A549 (cell line): ENCODE measurements at regions of chr11 and their contacts with region 1.

Region 1: DNA sequence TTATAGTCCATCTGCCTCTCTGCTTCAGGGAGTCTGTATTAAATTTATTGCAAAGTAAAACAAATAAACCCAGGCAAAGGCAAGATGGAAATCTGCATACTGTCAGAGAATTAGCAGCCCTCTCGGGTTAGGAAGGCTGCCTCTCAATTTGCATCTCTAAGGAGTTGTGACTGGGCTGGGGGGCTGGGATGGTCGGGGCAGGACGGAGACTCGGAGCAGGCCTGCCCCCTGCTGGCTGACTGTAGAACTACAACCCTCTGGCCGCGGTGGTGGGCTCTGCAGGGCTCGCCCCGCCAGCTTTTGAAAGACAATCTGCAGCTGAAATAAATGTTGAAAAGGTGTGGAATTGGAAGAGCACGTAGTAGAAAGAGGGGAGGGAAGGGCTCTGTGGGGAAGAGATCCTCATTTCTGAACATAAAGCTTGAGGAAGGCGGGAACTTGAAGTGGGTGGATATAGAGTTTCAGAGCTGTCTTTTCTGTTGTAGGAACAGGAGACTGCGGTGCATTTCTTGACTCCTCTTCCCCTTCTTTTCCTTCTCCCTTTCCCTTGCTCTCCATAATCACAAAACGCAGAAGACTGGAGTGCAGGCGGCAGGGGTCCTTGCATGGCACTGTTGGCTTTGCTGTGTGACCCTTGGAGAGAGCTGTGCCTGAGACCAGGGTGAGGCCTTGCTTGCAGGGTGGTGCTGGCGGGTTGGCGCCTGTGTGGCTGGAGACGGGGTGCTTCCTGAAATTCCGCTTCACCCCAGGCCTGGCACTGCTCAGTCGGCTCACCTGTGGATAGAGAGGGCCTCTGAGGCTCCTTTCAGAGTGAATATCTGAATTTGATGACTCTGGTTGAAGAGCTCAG is 22.6 kb upstream of the PKNOX2 start:
- DNase-seq: peak in 1 of 2 experiments; percentile 19
- ATAC-seq: peak; percentile 83 to 96; a peak in 5 of 6 replicates
- H3K4me3 ChIP-seq: no peak overlapping the region
- H3K27ac ChIP-seq: no peak overlapping the region
- H3K4me1 ChIP-seq: no peaks in the 10 kb centered on the region
- CTCF ChIP-seq: peak; percentile 70
- EP300 ChIP-seq: no peak
- POLR2A ChIP-seq: no peak
- RAD21 ChIP-seq: peak; percentile 60 to 64

Region 2: DNA sequence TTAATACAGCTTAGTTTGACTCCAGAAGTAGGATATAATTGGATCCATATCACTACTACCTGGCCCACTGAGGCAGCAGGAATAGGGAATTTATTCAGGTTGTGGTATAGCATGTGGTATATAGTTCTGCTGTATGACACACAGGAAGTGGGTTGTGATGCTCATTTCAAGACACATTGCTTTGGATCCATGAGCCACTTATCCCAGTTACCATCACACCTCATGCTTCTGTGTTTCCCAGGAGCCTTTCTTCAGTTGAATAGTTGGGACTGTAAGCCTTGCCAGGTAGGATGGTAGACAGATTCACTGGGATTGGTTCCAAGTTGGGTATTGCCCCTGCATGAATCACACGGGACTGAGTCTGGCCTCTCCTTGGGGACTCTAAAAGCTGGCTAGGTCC is 88.7 kb before region 1 on chr11:
- CTCF ChIA-PET with region 1: no interaction called
- POLR2A ChIA-PET with region 1: no interaction called
- DNase-seq: no peak
- ATAC-seq: no peak
- H3K4me3 ChIP-seq: no peak overlapping the region
- H3K27ac ChIP-seq: no peak overlapping the region
- H3K4me1 ChIP-seq: no peaks in the 10 kb centered on the region
- CTCF ChIP-seq: no peak
- EP300 ChIP-seq: no peak
- POLR2A ChIP-seq: no peak
- RAD21 ChIP-seq: no peak

Region 3: GRCh38 chr11:125091247-125091876 is 50.5 kb before region 1 on chr11:
- CTCF ChIA-PET with region 1: interaction called, 26 read pairs
- POLR2A ChIA-PET with region 1: no interaction called
- DNase-seq: peak; percentile 33 to 46
- ATAC-seq: peak; percentile 82 to 92
- H3K4me3 ChIP-seq: no peak overlapping the region
- H3K27ac ChIP-seq: no peak overlapping the region
- H3K4me1 ChIP-seq: no peaks in the 10 kb centered on the region
- CTCF ChIP-seq: peak; percentile 51
- EP300 ChIP-seq: no peak
- POLR2A ChIP-seq: no peak
- RAD21 ChIP-seq: peak; percentile 61 to 70

Region 4: DNA sequence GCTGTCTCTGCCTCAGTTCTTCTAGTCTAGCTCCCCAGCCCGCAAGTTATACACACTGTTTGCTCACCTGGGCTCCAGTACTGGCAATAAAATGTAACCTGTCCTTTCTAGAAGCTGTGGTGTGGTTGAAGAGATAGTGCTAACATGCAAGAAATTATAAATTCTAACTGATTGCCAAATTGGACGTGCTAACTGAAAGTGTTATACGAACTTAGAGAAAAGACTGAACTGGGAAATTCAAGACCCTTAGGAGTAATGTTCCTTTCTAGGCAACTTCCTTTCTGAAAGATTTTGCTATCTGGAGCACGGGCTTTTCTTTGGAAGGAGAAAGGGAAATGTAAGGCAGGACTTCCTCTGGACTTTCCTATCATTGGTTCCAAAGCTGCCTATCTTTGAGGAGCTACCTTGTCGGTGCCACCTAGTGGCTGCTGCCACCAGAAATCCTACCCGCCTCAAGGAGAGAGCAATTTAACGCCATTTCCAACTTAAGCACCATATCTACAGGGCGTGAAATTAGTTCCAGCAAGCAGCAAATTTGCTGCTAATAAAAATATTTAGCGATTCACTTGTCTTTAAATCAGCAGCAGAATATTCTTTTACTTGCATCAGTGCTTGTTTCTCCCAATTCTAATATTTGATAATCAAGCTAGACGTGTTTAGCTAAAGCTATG is 17.8 kb before region 1 on chr11:
- CTCF ChIA-PET with region 1: interaction called, 17 read pairs
- POLR2A ChIA-PET with region 1: no interaction called
- DNase-seq: peak; percentile 71 to 84
- ATAC-seq: peak; percentile 95 to 100
- H3K4me3 ChIP-seq: peak overlapping the region; percentile 35
- H3K27ac ChIP-seq: peak overlapping the region in 1 of 2 experiments; percentile 72; a peak in 3 of 6 replicates
- H3K4me1 ChIP-seq: no peaks in the 10 kb centered on the region
- CTCF ChIP-seq: peak; percentile 39
- EP300 ChIP-seq: no peak
- POLR2A ChIP-seq: no peak
- RAD21 ChIP-seq: peak; percentile 10 to 15; a peak in 1 of 5 replicates

Region 5: DNA sequence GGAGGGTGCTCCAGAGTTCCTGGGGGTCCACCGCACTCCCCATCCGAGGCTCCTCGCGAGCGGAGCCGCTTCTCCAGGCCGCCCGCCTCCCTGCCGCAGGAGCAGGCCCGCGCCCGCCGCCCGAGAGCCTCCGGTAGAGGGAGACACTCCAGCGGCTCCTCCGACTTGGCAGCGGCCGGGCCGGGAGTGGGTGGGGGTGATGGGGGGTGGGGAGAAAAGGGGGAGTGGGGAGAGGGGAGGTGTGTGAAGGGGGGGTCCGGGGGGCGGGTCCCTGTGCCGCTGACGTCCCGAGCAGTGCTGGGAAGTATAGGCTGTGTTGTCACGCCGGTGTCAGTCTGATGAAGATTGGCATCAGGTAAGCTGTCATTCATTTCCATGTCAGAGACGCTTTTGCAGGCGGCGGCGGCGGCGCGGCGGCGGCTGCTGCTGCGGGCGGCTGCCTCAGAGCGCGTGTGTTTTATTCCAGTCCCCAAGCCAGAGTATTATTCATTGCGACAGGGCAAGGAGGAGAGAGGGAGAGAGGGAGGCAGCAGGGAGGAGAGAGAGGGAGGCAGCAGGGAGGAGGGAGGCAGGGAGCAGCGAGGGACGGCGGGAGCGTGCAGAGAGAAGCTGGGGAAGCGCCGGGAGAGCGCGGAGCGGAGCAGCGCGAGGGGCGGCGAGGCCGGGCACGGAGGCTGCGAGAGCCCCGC is 22.7 kb after region 1 on chr11 and contains the start of gene PKNOX2:
- CTCF ChIA-PET with region 1: interaction called, 18 read pairs
- POLR2A ChIA-PET with region 1: interaction called, 3 read pairs
- DNase-seq: peak; percentile 41 to 47
- ATAC-seq: peak; percentile 86 to 92
- H3K4me3 ChIP-seq: peak within 1 kb of the TSS; percentile 57
- H3K27ac ChIP-seq: peak within 1 kb of the TSS in 1 of 2 experiments; percentile 68; a peak in 2 of 6 replicates
- H3K4me1 ChIP-seq: no peaks in the 10 kb centered on the region
- CTCF ChIP-seq: peak; percentile 43
- EP300 ChIP-seq: no peak
- POLR2A ChIP-seq: no peak
- RAD21 ChIP-seq: peak; percentile 21 to 50
- polyA plus RNA-seq, gene PKNOX2: not detected in 2 replicates

Region 6: DNA sequence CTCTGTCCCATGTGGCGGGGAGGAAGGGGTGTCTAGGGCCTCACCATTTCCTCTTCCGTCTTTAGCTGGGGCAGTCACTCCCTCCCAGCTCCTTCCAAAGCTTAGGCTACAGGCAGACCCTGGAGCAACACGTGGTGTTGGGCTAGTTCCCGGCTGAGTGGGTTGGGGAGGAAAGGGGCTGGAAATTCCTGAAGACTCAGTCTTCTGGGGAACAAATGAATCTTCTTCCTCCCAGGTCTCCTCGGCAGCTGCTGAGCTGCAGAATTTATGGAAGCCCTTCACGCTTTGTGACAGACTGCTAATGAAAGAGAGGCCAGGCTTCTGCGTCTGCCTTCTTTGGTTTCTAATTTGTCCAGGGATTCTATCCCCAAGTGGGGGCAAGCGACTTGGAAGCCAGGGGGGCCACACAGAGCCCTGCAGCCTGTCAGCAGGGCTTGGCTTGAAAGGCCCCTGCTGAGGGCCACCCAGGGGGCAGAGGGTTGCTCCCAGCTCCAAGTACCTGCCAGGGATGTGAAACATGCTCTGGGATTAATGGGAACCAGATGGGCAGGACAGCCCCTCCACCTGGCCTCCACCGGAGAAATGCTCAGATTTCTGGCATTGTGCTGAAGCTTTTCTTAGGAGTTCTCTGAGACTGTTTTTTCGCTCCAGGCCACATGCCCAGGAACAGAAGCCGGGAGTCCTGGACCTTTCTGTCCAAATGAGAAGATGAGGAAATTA is 145.7 kb after region 1 on chr11:
- CTCF ChIA-PET with region 1: no interaction called
- POLR2A ChIA-PET with region 1: no interaction called
- DNase-seq: no peak
- ATAC-seq: no peak
- H3K4me3 ChIP-seq: no peak overlapping the region
- H3K27ac ChIP-seq: no peak overlapping the region
- H3K4me1 ChIP-seq: no peaks in the 10 kb centered on the region
- CTCF ChIP-seq: no peak
- EP300 ChIP-seq: no peak
- POLR2A ChIP-seq: no peak
- RAD21 ChIP-seq: no peak